ENCODE measurements at regions of chr14 and their contacts with region 1.

Region 1: GRCh38 chr14:47917345-47917954 is 242.0 kb upstream of the MDGA2 start:
- DNase-seq: no peak
- ATAC-seq: no peak

Region 2: DNA sequence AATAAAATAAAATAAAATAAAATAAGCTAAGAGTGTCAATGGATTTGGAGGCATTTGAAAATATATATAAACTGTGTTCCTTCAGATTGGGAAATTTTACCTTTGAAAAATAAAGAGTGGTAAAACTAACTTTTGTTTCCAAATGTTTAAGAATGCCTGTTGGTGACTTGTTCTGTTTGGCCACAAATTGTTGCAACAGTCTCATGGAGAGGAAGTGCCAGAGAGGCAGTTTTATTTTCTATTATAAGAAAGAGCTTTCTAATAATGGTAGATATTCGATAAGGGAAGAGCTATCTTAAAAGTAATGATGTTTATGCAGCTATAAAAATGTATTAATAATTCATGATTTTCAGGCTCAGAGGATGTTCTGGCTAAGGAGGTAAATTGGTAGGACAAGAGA is 173.3 kb before region 1 on chr14:
- intact Hi-C with region 1: no loop called
- DNase-seq: no peak
- ATAC-seq: no peak

Region 3: GRCh38 chr14:49173765-49174373 is 1256.4 kb after region 1 on chr14:
- intact Hi-C with region 1: loop called in 1 of 2 experiments (anchors 10 kb)
- DNase-seq: peak; percentile 29
- ATAC-seq: peak; percentile 66 to 77

Region 4: DNA sequence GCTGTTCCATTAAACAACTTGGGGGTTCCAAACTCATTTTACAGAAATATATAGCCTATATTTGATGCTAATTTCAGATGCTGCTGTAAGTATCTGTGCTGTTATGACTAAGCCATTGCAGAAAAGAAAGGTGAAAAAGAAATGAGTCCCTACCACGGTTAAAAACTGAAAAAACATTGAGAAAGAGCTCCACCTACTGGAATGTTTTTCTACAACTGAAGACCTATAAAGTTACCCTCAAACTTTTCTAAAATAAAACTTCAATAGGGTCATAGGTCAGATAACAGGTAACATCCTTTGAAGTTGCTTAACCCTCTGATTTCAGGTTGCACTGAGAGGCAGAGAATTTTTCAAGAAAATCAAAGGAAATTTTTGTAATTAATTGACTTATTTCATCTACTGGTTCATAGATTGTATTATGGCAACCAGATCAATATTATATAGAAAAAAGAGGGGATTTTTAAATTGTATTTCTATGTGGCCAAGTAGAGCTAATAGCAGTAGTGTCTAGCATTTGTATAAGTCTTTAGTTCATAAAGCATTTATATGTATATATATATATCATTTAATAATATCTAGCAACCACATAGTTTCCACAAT is 1388.8 kb after region 1 on chr14:
- intact Hi-C with region 1: loop called in 1 of 2 experiments (anchors 5 kb)
- DNase-seq: no peak
- ATAC-seq: no peak